Activated T-helper 1 cell treated with anti-CD3 and anti-CD28 coated beads, Interleukin-12 subunit alpha, Interleukin-12 subunit beta, Interleukin-2, Interleukin-4 antibody, amounts not matched to agents 30 ng/mL and 10 ng/mL and 1 ng/mL, durations not matched to agents 14 hours and 24 hours and 36 hours (primary cell): ENCODE measurements at regions of chr11 and their contacts with region 1.

Region 1: DNA sequence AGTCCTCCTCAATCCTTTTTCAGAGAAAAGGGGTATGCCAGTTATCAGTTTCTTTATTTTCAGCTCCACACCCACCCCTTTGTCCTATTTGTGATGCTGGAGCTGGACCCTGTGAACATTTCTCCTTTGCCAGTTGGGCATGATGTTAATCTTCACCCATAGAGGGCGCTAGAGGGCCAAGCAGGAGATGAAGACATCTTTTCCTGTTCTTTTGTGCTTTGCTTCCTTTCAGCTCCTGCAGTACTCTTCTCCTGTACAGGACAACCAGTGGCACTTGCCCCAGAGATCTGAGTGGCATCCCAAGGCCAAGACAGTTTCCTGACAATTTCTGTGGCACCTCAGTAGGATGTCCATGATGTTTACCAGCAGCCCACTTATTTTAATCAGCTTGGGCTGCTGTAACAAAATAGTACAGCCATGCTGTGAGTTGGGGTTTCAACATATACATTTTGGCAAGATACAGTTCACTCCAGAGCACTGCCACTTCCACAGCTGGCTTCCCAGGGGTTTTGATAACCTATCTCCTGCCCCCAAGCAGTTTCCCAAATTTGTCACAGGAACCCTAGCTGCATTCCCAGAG is 4.6 kb downstream of the SAA2 start:
- DNase-seq: peak; percentile 65
- H3K4me3 Mint-ChIP-seq: no peak overlapping the region
- H3K27ac Mint-ChIP-seq: peak overlapping the region; percentile 10
- H3K4me1 Mint-ChIP-seq: peaks cover 39% of the 10 kb centered on the region
- H3K27me3 Mint-ChIP-seq: peaks cover 27% of the 10 kb centered on the region

Region 2: DNA sequence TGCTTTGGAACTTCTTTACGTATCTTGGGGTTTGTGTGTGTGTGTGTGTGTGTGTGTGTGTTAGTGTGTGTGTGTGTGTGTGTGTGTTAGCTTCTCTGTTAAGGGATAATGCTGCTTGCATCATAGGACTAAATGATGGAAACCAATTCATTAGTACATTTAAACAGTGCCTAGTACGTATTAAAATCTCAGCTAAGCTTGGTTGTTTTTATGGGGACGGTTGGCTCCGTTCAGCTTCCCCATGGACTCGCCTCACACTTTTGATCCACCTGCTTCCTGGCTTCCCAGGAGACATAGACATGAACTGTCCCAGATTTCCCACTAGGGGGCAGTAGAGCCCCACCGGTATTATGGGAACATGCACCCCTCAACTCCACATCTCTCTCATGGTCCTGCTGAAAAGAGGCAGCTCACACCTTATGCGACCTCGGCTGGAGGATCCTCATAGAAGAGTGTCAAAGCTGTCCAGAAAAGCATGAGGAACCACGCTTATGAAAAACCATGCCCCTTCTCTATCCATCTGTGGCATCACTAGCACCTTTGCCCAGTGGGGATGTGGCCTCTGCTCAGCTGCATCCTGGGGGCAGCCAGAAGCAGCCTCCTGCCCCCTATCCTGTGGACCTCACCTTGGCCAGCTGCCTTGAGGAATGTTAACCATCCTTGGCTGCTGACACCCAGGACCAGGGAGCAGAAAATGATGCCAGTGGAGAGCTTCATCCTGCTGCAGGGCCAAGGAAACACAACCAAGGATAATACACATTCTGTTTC is 128.3 kb before region 1 on chr11:
- intact Hi-C with region 1: loop called (anchors 2 kb)
- DNase-seq: peak; percentile 43
- H3K4me3 Mint-ChIP-seq: no peak overlapping the region
- H3K27ac Mint-ChIP-seq: no peak overlapping the region
- H3K4me1 Mint-ChIP-seq: peaks cover 8% of the 10 kb centered on the region
- H3K27me3 Mint-ChIP-seq: peaks cover 30% of the 10 kb centered on the region

Region 3: GRCh38 chr11:18395735-18396504 is 152.0 kb after region 1 on chr11:
- intact Hi-C with region 1: loop called (anchors 1 kb)
- DNase-seq: peak; percentile 96
- H3K4me3 Mint-ChIP-seq: peak overlapping the region; percentile 99
- H3K27ac Mint-ChIP-seq: peak overlapping the region; percentile 98
- H3K4me1 Mint-ChIP-seq: peaks cover 67% of the 10 kb centered on the region
- H3K27me3 Mint-ChIP-seq: no peaks in the 10 kb centered on the region

Region 4: GRCh38 chr11:18650859-18651557 is 407.1 kb after region 1 on chr11:
- intact Hi-C with region 1: loop called (anchors 2 kb)
- DNase-seq: peak; percentile 47
- H3K4me3 Mint-ChIP-seq: no peak overlapping the region
- H3K27ac Mint-ChIP-seq: no peak overlapping the region
- H3K4me1 Mint-ChIP-seq: peaks cover 13% of the 10 kb centered on the region
- H3K27me3 Mint-ChIP-seq: no peaks in the 10 kb centered on the region

Region 5: DNA sequence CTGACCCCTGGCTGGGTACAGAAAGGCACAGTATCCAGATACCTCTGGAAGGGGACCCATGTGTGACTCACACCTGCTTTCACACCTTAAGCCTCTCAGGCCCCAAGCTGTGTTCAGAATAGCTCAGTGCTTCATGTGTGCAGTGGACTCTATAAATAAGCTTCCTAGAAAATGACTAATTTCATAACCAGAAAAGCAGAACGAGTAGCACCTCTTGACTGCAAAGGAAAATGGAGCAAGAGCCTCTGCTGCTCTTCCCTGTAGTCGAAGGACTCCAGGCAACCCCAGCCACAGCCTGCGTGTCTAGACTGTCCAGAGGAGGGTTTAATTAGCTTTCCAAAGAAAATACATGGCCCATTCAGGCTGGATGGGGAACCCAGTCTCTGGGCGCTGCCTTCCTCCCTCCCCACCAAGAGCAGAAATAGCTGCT is 524.6 kb after region 1 on chr11:
- intact Hi-C with region 1: loop called (anchors 1 kb)
- DNase-seq: no peak
- H3K4me3 Mint-ChIP-seq: no peak overlapping the region
- H3K27ac Mint-ChIP-seq: no peak overlapping the region
- H3K4me1 Mint-ChIP-seq: peaks cover 34% of the 10 kb centered on the region
- H3K27me3 Mint-ChIP-seq: peaks cover 6% of the 10 kb centered on the region